Right ventricle myocardium inferior (tissue), 1 donor: ENCODE measurements at regions of chr5 and their contacts with region 1.

Region 1: GRCh38 chr5:143200781-143201398 is 202.6 kb downstream of the NR3C1 start:
- DNase-seq: no peak
- ATAC-seq: peak; percentile 97

Region 2: DNA sequence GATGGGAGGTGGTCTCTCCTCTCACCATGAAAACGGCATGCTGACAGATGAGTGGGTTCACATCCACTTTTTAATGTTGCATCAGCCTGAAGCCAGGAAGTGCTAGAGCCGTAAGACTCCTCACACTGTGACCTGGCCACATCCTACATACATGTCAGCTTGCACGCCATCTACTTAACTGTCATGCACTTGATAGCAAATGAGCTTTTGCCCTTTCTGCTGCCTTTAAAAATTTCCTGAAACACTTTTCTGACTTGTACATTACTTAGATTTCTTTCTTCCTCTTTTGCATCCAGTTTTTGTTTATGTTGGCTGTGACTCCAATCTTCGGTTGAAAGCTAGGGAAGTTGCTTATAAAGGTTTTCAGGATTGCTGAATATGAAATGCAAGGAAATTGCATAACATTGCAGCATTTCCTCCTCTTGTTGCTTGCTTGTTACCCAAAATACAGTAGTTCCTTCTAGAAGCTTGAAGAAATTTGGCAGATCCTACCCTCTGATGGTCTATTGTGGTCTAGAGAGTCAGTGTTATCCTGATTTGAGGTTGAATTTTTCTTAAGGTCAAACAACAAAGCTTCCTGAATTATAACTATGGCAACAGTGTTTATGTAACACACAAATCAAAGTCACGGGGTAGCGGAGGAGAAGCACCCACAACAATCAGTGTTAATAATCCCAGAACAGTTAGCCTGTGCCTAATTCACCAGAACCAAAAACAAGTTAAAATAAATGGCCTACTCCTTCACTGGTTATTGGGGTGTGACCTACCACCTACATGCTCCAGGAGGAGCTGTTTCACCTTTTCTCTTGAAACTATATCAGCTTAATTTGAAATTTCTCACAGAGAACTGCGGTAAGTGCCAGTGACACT is 198.2 kb before region 1 on chr5:
- intact Hi-C with region 1: loop called (anchors 5 kb)
- DNase-seq: no peak
- ATAC-seq: peak; percentile 74

Region 3: DNA sequence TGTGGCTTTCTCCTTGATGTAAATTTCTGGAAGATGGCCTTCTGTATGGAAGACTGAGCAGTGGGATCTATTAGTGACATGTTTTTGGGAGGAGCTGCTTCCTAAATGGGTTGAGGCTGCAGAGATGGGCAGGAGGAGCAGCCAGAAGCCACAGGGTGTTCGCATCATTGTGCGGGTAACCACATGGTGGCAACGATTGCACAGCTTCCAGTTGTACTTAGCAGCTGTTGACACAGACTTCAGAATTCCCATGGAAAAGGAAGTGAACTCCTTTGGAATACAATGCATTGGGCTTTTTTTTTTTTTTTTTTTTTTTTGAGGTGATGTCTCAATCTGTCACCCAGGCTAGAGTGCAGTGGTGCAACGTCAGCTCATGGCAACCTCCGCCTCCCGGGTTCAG is 94.7 kb before region 1 on chr5:
- intact Hi-C with region 1: loop called (anchors 5 kb)
- DNase-seq: no peak
- ATAC-seq: peak; percentile 56

Region 4: DNA sequence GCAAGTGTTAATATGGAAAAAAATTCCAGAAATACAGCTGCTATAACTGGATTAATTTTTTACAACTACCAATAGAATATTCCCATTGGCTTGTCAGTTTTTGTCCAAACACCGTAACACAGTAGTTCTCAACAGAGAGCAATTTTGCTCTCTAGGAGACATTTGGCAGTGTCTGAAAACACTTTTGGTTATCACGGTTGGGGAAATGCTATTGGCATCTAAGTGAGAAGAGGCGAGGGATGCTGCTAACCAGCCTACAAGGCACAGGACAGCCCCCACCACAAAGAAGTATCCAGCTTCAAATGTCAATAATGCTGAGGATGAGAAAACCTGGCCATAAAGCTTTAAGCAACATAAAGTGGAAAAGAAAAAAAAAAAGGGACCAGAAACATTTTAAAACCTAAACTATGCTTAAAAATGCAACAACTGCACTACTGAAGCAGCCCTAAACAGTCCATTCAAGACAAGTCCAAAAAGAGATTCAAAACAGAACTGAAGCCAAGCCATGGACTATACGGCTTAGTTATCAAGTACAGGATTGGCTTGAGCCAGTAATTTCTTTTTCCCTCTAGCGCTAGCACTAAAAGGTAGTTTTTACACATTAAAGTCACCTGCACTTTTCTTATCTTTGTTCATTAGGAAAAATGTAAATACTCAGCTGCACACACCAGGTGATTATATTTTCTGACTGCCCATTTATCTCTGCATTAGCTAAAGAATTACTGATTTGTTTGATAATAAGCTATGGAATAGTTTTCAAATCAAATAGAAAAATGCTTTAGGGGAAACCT is 118.7 kb after region 1 on chr5:
- intact Hi-C with region 1: no loop called
- DNase-seq: no peak
- ATAC-seq: peak; percentile 38

Region 5: DNA sequence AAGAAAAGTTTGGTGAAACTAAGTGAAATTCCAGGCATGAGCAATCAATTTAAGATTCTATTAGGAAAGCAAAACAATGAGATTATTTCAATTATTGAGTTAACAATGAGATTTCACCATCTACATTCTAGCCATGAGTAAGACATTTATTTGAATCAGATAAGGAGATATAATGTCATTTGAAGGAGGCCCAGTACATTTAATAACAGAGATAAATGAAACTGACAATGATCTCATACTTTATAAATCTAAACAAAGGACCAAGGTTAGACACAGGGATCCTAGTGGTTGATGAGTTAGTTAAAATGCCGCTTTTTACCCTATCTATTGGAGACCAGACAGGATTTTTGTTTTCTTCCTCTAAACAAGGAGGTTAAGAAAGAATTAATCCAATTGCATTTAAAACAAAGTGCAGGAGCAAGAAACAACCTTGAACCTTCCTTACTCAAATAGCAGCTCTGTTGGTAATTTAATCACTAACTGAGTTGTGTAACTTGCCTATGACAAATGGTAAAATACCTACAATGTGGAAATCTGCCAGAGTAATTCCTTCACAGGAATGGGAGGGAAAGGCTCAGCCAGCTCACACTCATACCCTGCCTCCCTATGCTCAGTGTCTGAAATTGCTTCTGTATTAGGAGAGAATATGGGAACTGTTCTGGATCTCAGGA is 306.1 kb after region 1 on chr5:
- intact Hi-C with region 1: no loop called
- DNase-seq: no peak
- ATAC-seq: peak; percentile 72